ENCODE measurements at regions of chr7 and their contacts with region 1.

Region 1: GRCh38 chr7:20407585-20408461 is 77.1 kb downstream of the ITGB8 start:
- DNase-seq: peak; percentile 29 to 45
- H3K4me3 ChIP-seq: no peak overlapping the region
- H3K4me3 Mint-ChIP-seq: no peak overlapping the region
- H3K27ac Mint-ChIP-seq: peak overlapping the region; percentile 55
- H3K4me1 ChIP-seq: peaks cover 15% of the 10 kb centered on the region
- H3K4me1 Mint-ChIP-seq: peaks cover 17% of the 10 kb centered on the region
- H3K27me3 ChIP-seq: no peaks in the 10 kb centered on the region
- H3K27me3 Mint-ChIP-seq: no peaks in the 10 kb centered on the region
- CTCF ChIP-seq: no peak

Region 2: DNA sequence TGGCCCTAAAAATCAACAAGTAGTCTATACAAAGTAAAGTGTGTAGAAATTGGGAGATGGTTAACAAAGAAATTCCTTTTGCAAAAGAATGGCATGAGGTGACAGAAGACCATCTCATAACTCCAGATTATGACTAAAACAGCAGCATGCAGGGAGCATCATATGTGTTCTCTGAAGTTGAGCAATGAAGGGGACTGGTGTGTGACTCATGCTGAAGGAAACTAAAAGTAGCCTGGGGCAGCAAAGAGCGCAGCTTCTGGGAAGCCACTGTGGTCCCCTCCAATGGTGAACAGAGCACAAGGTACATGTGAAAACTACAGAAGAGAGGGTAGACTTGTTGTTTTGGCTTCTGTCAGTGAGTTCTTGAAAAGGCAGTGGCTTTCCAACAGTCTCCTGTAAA is 324.0 kb before region 1 on chr7:
- CTCF ChIA-PET with region 1: no interaction called
- POLR2A ChIA-PET with region 1: no interaction called
- intact Hi-C with region 1: no loop called
- DNase-seq: peak; percentile 34 to 64
- H3K4me3 ChIP-seq: no peak overlapping the region
- H3K4me3 Mint-ChIP-seq: no peak overlapping the region
- H3K27ac Mint-ChIP-seq: peak overlapping the region; percentile 74
- H3K4me1 ChIP-seq: peaks cover 36% of the 10 kb centered on the region
- H3K4me1 Mint-ChIP-seq: peaks cover 34% of the 10 kb centered on the region
- H3K27me3 ChIP-seq: no peaks in the 10 kb centered on the region
- H3K27me3 Mint-ChIP-seq: no peaks in the 10 kb centered on the region
- CTCF ChIP-seq: no peak

Region 3: DNA sequence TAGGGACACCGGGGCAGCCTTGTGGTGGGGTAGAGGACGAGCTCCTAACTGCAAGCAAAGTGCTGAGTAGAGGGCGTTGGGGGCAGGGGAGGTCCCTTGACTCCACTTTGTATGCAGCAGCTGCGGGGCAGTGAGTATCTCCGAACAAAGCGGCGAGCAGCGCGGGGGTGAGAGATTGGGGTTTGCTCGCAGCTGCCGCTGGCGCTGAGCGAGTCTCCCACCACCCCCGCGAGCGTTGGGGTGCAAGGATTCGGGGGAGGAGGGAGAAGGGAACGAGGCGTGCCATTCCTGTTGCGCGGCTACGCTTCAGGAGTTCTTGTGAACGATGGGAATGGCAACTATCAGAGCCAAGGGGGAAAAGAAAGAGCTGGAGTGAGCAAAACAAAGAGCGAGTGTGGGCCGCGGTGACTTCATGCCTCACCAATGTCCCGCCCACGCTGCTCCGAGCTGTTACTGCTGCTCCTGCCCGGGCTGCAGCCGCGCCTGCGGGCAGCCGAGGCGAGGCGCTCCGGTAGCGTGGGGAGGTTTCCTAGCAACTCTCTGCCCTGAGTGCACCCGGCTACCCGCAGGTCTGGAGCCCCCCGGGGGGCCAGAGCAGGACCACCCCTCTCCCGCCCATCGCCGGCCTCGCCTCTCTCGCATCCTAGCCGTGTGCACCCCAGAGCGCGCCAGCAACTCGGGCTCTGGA is 77.4 kb before region 1 on chr7 and contains the start of gene ITGB8:
- CTCF ChIA-PET with region 1: no interaction called
- POLR2A ChIA-PET with region 1: no interaction called
- intact Hi-C with region 1: loop called (anchors 5 kb)
- DNase-seq: peak; percentile 76 to 77
- H3K4me3 ChIP-seq: peak within 1 kb of the TSS; percentile 91
- H3K4me3 Mint-ChIP-seq: peak within 1 kb of the TSS; percentile 85
- H3K27ac Mint-ChIP-seq: peak within 1 kb of the TSS; percentile 88
- H3K4me1 ChIP-seq: peaks cover 4% of the 10 kb centered on the region; the same call in 1 of the 2 replicates
- H3K4me1 Mint-ChIP-seq: no peaks in the 10 kb centered on the region
- H3K27me3 ChIP-seq: no peaks in the 10 kb centered on the region
- H3K27me3 Mint-ChIP-seq: no peaks in the 10 kb centered on the region
- CTCF ChIP-seq: no peak
- total RNA-seq, gene ITGB8: 3.2 and 4.6 TPM in 2 replicates

Region 4: DNA sequence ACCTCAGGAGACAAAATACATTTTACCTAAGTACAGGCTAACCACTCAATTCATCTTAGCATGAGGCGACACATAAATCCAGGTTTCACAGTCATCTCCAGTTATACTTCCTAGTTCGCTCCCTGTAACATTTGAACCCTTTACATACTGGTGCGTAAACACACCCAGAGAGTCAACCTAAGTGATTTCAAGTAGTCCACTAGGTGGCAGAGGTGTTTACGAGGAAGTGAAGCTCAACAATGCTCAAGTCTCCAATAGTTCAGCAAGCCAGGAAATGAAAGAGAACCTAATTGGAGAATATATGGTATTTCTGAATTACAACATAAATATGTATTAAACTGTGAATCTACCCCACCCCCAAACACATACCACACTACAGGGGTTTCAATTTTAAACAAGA is 131.4 kb after region 1 on chr7:
- CTCF ChIA-PET with region 1: no interaction called
- POLR2A ChIA-PET with region 1: no interaction called
- intact Hi-C with region 1: no loop called
- DNase-seq: peak in 1 of 2 experiments; percentile 34
- H3K4me3 ChIP-seq: no peak overlapping the region
- H3K4me3 Mint-ChIP-seq: no peak overlapping the region
- H3K27ac Mint-ChIP-seq: no peak overlapping the region
- H3K4me1 ChIP-seq: no peaks in the 10 kb centered on the region
- H3K4me1 Mint-ChIP-seq: no peaks in the 10 kb centered on the region
- H3K27me3 ChIP-seq: no peaks in the 10 kb centered on the region
- H3K27me3 Mint-ChIP-seq: peaks cover 6% of the 10 kb centered on the region
- CTCF ChIP-seq: peak; percentile 31

Measured in Caco-2 (cell line).